ENCODE measurements at regions of chr11 and their contacts with region 1.

Region 1: DNA sequence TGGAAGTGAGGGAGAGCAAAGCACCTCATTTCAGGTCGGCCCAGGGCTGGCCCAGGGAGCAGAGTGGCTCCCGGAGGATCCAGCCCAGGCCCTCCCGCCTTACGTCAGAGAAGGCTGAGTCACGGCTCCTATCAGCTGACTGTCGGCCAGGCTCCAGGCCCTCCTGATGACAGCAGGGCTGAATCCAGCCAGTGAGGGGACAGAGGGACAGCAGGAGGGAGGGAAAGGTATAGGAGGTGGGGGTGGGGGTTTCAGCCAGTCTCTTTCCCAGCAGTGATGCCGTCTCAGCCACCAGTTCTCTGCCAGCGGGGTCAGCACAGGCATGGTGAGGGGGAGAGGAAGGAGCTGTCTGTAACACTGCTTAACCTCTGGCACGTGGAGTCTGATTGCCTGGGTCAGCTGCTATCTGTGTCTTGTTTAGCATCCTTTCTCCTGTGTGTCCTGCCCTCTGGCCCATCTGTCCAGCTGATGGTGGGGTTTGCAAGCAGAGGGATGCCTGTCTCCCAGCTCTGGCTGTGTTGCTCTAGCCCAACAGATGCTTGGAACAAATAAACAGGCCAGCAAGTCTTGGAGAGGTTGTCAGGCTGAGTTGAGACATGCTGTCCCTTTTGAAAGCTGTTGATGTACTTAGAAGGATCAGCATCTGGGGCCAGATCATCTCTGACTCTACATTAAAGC is 74.0 kb downstream of the ADAMTS15 start:
- DNase-seq: peak; percentile 91 to 94
- ATAC-seq: peak; percentile 94 to 97 (median 97)
- H3K4me3 ChIP-seq: peak overlapping the region in 1 of 10 donors; percentile 8
- H3K27ac ChIP-seq: peak overlapping the region; percentile 75 to 94 (median 88)
- H3K4me1 ChIP-seq: peaks cover 21 to 52% (median 44%) of the 10 kb centered on the region in 9 donors
- H3K27me3 ChIP-seq: no peaks in the 10 kb centered on the region
- CTCF ChIP-seq: no peak

Region 2: DNA sequence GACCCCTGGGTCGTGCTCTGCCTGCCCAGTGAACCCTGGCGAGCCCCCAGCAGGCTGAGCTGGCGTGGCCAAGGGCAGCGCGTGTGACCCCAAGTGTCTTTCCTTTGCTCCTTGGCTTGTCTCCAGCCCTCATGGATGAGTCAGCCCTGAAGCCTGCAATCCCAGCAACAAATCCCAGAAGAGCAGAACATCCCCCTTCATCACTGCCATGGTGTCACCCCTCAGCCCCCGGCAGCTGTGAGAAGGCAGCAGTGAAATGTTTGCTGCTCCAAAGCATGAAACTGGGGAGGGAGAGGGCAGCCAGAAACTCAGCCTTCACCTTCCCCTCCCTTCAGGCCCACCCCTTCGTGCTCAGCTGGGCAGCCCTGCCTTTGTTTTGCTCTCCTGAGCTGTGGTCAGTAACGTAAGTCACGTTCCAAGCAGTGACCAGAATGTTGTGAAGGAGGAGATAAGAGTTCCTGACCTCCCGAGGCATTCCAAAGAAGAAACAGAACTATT is 44.2 kb before region 1 on chr11:
- intact Hi-C with region 1: loop called in 5 of 10 experiments (anchors 2 to 5 kb)
- DNase-seq: peak; percentile 80 to 81
- ATAC-seq: peak; percentile 64 to 86 (median 77)
- H3K4me3 ChIP-seq: no peak overlapping the region
- H3K27ac ChIP-seq: peak overlapping the region; percentile 54 to 93 (median 82)
- H3K4me1 ChIP-seq: peaks cover 14 to 58% (median 52%) of the 10 kb centered on the region in 9 donors
- H3K27me3 ChIP-seq: no peaks in the 10 kb centered on the region
- CTCF ChIP-seq: no peak

Region 3: GRCh38 chr11:130549393-130549999 is 27.1 kb after region 1 on chr11:
- intact Hi-C with region 1: no loop called
- DNase-seq: no peak
- ATAC-seq: no peak
- H3K4me3 ChIP-seq: no peak overlapping the region
- H3K27ac ChIP-seq: no peak overlapping the region
- H3K4me1 ChIP-seq: peaks cover 0 to 14% (median 2%) of the 10 kb centered on the region in 9 donors
- H3K27me3 ChIP-seq: no peaks in the 10 kb centered on the region
- CTCF ChIP-seq: no peak

Region 4: GRCh38 chr11:130609121-130610035 is 87.0 kb after region 1 on chr11:
- intact Hi-C with region 1: loop called in 2 of 10 experiments (anchors 5 kb)
- DNase-seq: peak; percentile 79 to 84
- ATAC-seq: peak; percentile 81 to 89 (median 86)
- H3K4me3 ChIP-seq: no peak overlapping the region
- H3K27ac ChIP-seq: peak overlapping the region; percentile 61 to 87 (median 80)
- H3K4me1 ChIP-seq: peaks cover 4 to 65% (median 47%) of the 10 kb centered on the region in 9 donors
- H3K27me3 ChIP-seq: no peaks in the 10 kb centered on the region
- CTCF ChIP-seq: no peak

Region 5: DNA sequence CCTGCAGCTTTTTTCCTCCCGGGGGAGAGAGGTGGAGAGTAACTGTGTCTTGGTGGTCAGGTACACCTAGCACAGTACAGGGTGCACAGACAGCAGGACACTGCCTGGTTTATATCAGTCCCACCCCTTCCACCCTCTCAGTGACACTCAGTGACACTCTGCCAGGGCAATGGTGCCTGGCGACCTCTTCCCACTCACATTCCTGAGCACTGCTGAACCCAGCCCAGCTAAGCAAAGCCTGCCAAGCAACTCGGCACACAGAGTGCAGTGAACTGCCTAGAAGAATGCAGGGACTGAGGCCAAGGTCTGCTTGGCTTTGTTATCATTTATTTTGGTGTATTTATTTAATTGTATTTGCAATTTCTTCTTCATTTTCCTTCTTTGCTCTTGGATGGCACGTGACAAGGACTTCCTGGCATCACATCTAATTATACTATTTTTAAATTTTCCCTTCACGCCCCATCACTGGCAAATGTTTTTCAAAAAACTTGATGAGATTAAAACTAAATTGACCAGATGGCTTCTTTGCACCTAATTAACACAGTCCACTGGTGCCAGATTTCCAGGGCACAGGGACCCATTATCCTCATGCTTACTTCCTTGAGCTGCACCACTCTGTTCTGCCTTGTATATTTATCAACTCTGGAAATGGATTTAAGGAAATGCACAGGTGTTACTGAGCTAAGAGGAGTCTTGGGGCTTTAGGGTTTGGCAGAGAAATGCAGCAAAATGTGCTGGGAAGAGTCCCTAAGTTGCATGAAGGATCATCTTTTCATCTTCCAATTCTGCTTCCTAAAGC is 131.6 kb after region 1 on chr11:
- intact Hi-C with region 1: loop called in 3 of 10 experiments (anchors 5 to 10 kb)
- DNase-seq: peak; percentile 84 to 85
- ATAC-seq: peak; percentile 94 to 98 (median 96)
- H3K4me3 ChIP-seq: no peak overlapping the region
- H3K27ac ChIP-seq: peak overlapping the region; percentile 1 to 75 (median 68)
- H3K4me1 ChIP-seq: peaks cover 7 to 50% (median 34%) of the 10 kb centered on the region in 9 donors
- H3K27me3 ChIP-seq: no peaks in the 10 kb centered on the region
- CTCF ChIP-seq: no peak

Region 6: DNA sequence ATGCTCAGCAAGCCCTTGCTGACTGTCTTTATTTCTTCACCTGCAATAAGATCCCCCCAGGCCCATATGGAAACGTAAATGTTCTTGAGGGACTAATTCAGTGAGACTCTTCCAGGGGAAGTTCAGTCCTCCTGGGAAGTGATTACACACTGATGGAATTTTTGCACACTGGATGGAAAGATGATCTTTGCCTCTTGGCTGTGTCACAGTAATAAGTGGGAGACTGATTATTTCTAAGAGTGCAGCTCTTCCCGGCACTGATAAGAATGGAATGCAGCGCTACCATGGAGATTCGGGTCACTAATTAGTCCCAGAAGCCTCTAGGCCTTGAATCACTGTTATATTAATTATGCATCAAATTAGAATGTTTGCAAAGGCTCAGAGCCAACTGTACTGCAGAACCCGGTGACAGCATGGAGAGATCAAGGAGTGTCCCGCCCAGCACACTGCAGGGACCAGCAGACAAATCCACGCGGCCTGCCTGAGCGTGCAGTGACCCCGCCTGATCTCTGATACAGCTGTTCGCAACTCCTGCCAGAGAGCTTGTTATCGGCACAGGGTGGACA is 215.5 kb after region 1 on chr11:
- intact Hi-C with region 1: loop called in 1 of 10 experiments (anchors 5 kb)
- DNase-seq: peak; percentile 72 to 74
- ATAC-seq: peak; percentile 93 to 97 (median 96)
- H3K4me3 ChIP-seq: no peak overlapping the region
- H3K27ac ChIP-seq: peak overlapping the region; percentile 13 to 68 (median 58)
- H3K4me1 ChIP-seq: peaks cover 0 to 23% (median 21%) of the 10 kb centered on the region in 9 donors
- H3K27me3 ChIP-seq: no peaks in the 10 kb centered on the region
- CTCF ChIP-seq: no peak

Measured in heart right ventricle (tissue), 16 donors.